HCT116 (cell line): ENCODE measurements at regions of chr6 and their contacts with region 1.

Region 1: DNA sequence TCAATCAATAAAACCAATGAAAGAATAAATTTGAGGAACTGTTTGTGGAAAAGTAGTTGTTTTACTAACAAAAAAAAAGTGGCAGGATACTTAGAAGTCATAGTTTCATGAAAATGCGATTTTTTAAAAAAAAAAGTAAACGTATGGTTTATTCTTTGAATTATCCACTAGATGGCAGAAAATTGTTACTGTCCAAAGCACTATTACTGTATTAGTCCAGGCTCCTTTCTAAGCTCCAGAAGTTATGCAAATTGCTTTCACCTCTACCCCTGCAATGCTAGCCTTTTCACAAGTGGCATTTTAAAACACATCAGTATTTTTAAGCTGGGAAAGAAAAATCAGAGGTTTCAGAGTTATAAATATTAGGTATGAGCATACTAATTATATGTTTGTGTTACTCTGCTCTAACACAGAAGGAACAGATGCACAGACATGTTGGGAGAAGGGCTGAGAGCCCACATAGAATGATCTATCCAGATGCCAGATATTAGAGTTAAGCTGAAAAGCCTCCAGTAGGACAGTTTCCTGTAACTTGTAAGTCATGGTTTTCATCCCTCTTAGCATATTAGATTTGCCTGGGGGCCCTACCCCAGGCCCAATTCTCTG is 63.9 kb downstream of the FHL5 start:
- DNase-seq: peak; percentile 22
- ATAC-seq: peak; percentile 93
- H3K4me3 ChIP-seq: no peak overlapping the region
- H3K27ac ChIP-seq: no peak overlapping the region
- H3K4me1 ChIP-seq: peaks cover 0 to 5% of the 10 kb centered on the region in 2 experiments; a peak in 1 of 4 replicates
- H3K27me3 ChIP-seq: no peaks in the 10 kb centered on the region
- CTCF ChIP-seq: peak in 2 of 3 experiments; percentile 44 to 51; a peak in 3 of 6 replicates
- POLR2A ChIP-seq: no peak
- RAD21 ChIP-seq: peak; percentile 72

Region 2: DNA sequence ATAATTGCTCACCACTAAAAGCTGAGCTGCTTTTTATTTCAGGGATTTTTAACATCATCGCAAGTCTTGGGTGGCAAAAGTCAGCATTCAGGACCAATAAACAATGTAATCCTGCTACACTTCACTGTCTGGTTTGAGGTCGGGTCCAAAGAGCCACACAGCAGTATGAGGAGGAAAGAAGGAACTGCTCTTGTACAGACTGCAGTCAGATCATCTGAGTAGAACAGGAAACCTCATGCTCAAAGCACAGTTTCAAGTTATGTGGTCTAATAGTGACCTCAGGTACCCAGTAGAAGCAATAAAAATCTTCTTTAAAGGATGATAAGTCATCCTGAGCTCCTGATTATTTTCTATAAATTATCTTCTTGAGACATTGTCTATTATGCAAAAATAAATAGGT is 399.7 kb before region 1 on chr6:
- CTCF ChIA-PET with region 1: no interaction called
- POLR2A ChIA-PET with region 1: no interaction called
- RAD21 ChIA-PET with region 1: no interaction called
- intact Hi-C with region 1: no loop called
- DNase-seq: no peak
- ATAC-seq: no peak
- H3K4me3 ChIP-seq: no peak overlapping the region
- H3K27ac ChIP-seq: no peak overlapping the region
- H3K4me1 ChIP-seq: no peaks in the 10 kb centered on the region
- H3K27me3 ChIP-seq: no peaks in the 10 kb centered on the region
- CTCF ChIP-seq: no peak
- POLR2A ChIP-seq: no peak
- RAD21 ChIP-seq: no peak

Region 3: DNA sequence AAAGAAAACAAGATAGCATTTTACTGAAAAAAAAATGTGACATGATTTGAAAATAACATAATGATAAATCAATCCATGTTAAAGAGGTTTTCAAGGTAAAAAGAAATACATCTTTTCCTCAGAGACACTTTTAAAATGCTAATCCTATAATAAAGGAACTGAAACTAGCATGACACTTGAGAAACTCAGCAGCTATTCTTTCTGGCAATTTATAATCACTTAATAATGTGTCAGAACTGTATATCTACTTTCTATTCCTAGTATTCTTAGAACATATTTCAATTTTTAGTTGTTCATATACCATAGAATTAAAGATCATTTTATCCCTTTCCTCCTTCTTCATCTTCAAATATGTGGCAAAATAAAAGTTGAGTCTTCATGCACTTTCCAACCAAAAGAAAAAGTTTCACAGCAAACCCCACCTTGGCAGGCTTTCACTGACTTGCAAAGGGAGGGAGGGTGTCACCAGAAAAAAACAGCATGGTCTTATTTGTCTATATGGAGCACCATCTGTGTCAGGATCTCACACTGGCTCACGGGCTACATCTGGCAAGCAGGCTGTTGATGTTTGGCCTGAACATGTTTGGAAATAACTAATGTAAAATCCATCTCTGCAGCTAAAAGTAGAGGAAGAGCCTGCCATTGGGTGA is 15.4 kb before region 1 on chr6:
- CTCF ChIA-PET with region 1: no interaction called
- POLR2A ChIA-PET with region 1: no interaction called
- RAD21 ChIA-PET with region 1: no interaction called
- intact Hi-C with region 1: no loop called
- DNase-seq: no peak
- ATAC-seq: no peak
- H3K4me3 ChIP-seq: no peak overlapping the region
- H3K27ac ChIP-seq: no peak overlapping the region
- H3K4me1 ChIP-seq: no peaks in the 10 kb centered on the region
- H3K27me3 ChIP-seq: no peaks in the 10 kb centered on the region
- CTCF ChIP-seq: no peak
- POLR2A ChIP-seq: no peak
- RAD21 ChIP-seq: no peak

Region 4: DNA sequence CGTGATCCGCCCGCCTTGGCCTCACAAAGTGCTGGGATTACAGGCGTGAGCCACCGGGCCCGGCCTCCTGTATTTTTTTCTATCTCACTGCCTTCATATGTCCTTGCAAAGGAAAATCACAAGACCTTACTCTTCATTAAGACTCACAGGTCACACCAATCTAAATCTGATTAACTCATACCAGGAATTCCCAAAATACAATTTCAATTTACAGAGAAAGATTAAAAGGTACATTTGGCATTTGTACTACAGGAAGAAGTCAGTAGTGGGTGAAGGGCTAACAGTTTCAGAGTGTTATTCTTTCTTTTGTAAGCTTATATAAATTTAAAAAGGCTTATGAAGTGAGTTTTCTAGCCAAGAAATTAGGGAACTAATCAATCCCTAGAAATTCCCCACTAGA is 123.0 kb after region 1 on chr6:
- CTCF ChIA-PET with region 1: no interaction called
- POLR2A ChIA-PET with region 1: no interaction called
- RAD21 ChIA-PET with region 1: no interaction called
- intact Hi-C with region 1: no loop called
- DNase-seq: no peak
- ATAC-seq: no peak
- H3K4me3 ChIP-seq: no peak overlapping the region
- H3K27ac ChIP-seq: no peak overlapping the region
- H3K4me1 ChIP-seq: no peaks in the 10 kb centered on the region
- H3K27me3 ChIP-seq: no peaks in the 10 kb centered on the region
- CTCF ChIP-seq: no peak
- POLR2A ChIP-seq: no peak
- RAD21 ChIP-seq: no peak

Region 5: GRCh38 chr6:97053643-97054411 is 427.0 kb after region 1 on chr6:
- CTCF ChIA-PET with region 1: interaction called, 11 read pairs
- POLR2A ChIA-PET with region 1: interaction called, 3 read pairs
- RAD21 ChIA-PET with region 1: no interaction called
- intact Hi-C with region 1: loop called (anchors 2 kb)
- DNase-seq: peak; percentile 21
- ATAC-seq: no peak
- H3K4me3 ChIP-seq: no peak overlapping the region
- H3K27ac ChIP-seq: no peak overlapping the region
- H3K4me1 ChIP-seq: no peaks in the 10 kb centered on the region
- H3K27me3 ChIP-seq: 0 out of 2 replicates have a peak, but pooled peaks cover 4% of the 10 kb centered on the region
- CTCF ChIP-seq: peak; percentile 34 to 77 (median 69); a peak in 4 of 6 replicates
- POLR2A ChIP-seq: no peak
- RAD21 ChIP-seq: peak; percentile 78